ENCODE measurements at regions of chr9 and their contacts with region 1.

Region 1: GRCh38 chr9:92634712-92635605 is 35.0 kb downstream of the IPPK start:
- H3K4me3 Mint-ChIP-seq: no peak overlapping the region
- H3K27ac Mint-ChIP-seq: peak overlapping the region; percentile 8
- H3K4me1 Mint-ChIP-seq: no peaks in the 10 kb centered on the region
- H3K27me3 Mint-ChIP-seq: no peaks in the 10 kb centered on the region

Region 2: GRCh38 chr9:92140074-92140753 is 494.7 kb before region 1 on chr9:
- intact Hi-C with region 1: loop called (anchors 5 kb)
- H3K4me3 Mint-ChIP-seq: no peak overlapping the region
- H3K27ac Mint-ChIP-seq: no peak overlapping the region
- H3K4me1 Mint-ChIP-seq: peaks cover 13% of the 10 kb centered on the region
- H3K27me3 Mint-ChIP-seq: peaks cover 49% of the 10 kb centered on the region

Region 3: GRCh38 chr9:92342825-92343488 is 292.0 kb before region 1 on chr9:
- intact Hi-C with region 1: loop called (anchors 1 kb)
- H3K4me3 Mint-ChIP-seq: no peak overlapping the region
- H3K27ac Mint-ChIP-seq: no peak overlapping the region
- H3K4me1 Mint-ChIP-seq: no peaks in the 10 kb centered on the region
- H3K27me3 Mint-ChIP-seq: no peaks in the 10 kb centered on the region

Region 4: GRCh38 chr9:92501671-92502393 is 133.1 kb before region 1 on chr9:
- intact Hi-C with region 1: loop called (anchors 5 kb)
- H3K4me3 Mint-ChIP-seq: no peak overlapping the region
- H3K27ac Mint-ChIP-seq: no peak overlapping the region
- H3K4me1 Mint-ChIP-seq: no peaks in the 10 kb centered on the region
- H3K27me3 Mint-ChIP-seq: no peaks in the 10 kb centered on the region

Region 5: DNA sequence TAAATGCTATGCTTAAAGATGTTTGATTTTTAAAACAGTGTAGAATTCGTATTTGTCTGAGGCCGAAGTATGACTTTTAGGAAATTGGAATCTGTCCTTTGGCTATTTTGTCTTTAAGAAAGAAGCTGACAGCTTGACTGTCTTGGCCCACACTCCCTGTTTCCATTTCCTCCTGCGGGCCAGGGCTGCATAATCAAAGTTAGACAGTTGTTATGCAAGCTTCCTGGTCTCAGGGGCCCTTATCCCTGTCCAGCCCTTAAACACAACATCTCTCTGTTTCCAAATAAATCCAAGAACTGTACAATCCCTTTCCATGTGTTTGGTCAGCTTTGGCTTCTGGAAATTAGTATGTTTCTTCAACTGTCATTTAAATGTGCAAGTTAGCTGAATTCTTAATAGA is 44.6 kb before region 1 on chr9:
- intact Hi-C with region 1: no loop called
- H3K4me3 Mint-ChIP-seq: no peak overlapping the region
- H3K27ac Mint-ChIP-seq: no peak overlapping the region
- H3K4me1 Mint-ChIP-seq: peaks cover 17% of the 10 kb centered on the region
- H3K27me3 Mint-ChIP-seq: no peaks in the 10 kb centered on the region

Region 6: DNA sequence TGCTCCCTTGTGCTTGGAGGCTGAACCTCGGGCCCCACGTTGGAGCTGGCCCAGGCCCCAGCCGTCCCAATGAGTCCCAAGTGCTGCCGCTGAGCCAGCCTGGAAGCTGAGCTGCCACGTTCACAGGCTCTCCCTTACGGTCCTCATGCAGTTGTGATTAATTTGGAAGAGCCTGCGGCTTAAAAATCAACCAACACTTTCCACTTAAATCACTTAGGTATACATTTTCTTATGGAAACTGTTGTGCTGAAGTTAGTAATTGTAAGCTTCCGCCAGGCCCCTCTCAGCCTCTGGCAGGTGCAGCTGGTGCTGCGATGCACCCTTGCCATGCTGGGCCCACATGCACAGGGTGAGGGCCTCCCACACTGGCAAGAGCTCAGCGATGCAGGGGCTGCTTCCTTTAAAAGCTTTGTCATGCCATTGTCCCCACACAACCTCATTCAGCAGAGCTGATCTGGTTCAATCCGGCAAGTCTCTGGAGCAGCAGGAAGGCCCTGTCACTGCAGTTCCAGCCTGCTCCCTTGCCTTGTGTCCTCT is 26.0 kb before region 1 on chr9:
- intact Hi-C with region 1: no loop called
- H3K4me3 Mint-ChIP-seq: no peak overlapping the region
- H3K27ac Mint-ChIP-seq: no peak overlapping the region
- H3K4me1 Mint-ChIP-seq: no peaks in the 10 kb centered on the region
- H3K27me3 Mint-ChIP-seq: no peaks in the 10 kb centered on the region

Region 7: GRCh38 chr9:93126825-93127368 is 491.9 kb after region 1 on chr9:
- intact Hi-C with region 1: no loop called
- H3K4me3 Mint-ChIP-seq: peak overlapping the region; percentile 50
- H3K27ac Mint-ChIP-seq: peak overlapping the region; percentile 96
- H3K4me1 Mint-ChIP-seq: peaks cover 93% of the 10 kb centered on the region
- H3K27me3 Mint-ChIP-seq: no peaks in the 10 kb centered on the region